ENCODE measurements at regions of chr1 and their contacts with region 1.

Region 1: GRCh38 chr1:234533975-234534876 is 55.2 kb upstream of the TARBP1 start:
- DNase-seq: peak; percentile 62 to 98
- H3K4me3 ChIP-seq: peak overlapping the region in 1 of 2 donors; percentile 2
- H3K27ac ChIP-seq: peak overlapping the region; percentile 95 to 99
- H3K4me1 ChIP-seq: peaks cover 43 to 90% of the 10 kb centered on the region in 2 donors
- H3K27me3 ChIP-seq: no peaks in the 10 kb centered on the region
- CTCF ChIP-seq: no peak

Region 2: DNA sequence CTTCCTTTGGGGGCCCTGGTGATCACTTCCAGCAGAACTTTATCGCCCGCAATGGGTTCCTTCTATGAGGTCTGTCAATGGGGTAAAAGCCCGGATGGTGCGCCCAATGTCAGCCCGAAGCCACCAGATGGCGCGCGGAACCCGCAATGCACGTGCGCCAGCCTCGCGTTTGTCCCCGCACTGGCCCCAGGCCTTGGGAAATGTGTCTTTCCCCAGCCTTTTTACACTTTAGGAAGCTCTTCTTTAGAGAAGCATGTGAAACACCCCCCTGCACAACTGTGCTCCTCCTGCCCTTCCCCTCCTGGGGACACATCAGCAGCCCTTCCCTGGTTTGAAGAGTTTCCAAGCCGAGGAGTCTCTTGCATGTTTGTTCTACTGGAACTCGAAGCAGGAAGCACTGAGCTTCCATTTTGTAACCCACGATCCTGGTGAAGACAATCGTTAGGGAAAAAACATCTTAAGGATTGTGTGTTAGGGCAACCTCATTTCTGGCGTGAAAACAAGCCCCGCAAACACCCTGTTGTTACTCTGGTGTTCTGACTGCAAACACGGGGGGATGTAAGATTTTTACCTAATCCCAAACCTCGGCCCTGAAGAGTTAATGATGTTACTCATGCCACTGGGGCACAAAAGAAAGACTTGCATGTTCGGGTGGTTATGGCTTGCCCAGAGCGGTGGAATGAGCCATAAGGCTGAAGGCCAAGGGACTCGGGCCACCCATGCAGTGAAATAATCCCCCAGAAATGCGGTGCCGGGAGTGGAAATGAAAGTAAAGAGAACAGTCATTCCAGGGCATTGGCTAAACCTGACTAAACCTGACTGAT is 34.9 kb before region 1 on chr1:
- intact Hi-C with region 1: loop called (anchors 1 kb)
- DNase-seq: peak; percentile 71 to 96
- H3K4me3 ChIP-seq: peak overlapping the region; percentile 17 to 49
- H3K27ac ChIP-seq: peak overlapping the region; percentile 85 to 95
- H3K4me1 ChIP-seq: peaks cover 8 to 30% of the 10 kb centered on the region in 2 donors
- H3K27me3 ChIP-seq: no peaks in the 10 kb centered on the region
- CTCF ChIP-seq: peak; percentile 94 to 97 (median 94)

Region 3: GRCh38 chr1:234599617-234600417 is 65.6 kb after region 1 on chr1:
- intact Hi-C with region 1: loop called (anchors 2 kb)
- DNase-seq: peak; percentile 76 to 96
- H3K4me3 ChIP-seq: peak overlapping the region; percentile 49 to 57
- H3K27ac ChIP-seq: peak overlapping the region; percentile 96 to 99
- H3K4me1 ChIP-seq: peaks cover 11 to 40% of the 10 kb centered on the region in 2 donors
- H3K27me3 ChIP-seq: no peaks in the 10 kb centered on the region
- CTCF ChIP-seq: peak in 1 of 3 experiments; percentile 9

Region 4: DNA sequence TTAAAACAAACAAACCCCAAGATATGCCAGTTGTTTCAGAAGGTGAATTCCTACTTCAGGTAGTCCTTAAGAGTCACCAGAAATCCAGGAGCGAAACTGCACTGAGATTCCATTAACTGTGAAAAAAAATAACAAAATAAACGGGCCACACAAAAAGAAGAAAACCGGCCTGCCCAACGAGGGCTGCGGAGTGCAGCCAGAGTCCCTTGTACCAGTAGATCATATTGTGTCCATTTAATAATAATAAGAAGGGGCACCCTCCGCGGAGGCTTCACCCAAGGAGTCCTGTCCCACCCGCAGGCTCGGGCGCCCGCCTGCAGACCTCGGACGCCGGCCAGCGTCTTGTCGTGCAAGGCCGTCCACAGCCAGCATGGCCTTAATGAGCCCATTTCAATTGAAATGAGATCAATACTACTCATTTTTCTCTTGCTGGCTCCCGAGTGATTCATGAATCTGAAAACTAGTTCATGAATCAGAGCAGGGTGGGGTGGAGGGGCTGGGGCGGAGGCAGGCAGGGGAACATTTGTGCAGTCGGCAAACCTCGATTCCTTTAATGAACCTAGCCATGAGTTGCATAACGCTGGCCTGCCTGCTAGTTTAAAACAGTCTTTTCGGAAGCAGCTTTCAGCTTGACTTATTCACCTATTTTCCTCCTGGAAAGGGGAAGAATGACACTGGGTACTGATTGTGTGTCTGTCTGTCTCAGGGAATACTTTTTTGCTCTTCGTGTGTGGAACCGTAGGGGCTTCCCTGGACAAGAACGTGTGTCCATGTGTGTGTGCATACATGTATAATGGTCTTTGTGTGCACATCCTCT is 188.9 kb after region 1 on chr1:
- intact Hi-C with region 1: loop called (anchors 2 kb)
- DNase-seq: peak; percentile 63 to 93
- H3K4me3 ChIP-seq: peak overlapping the region; percentile 26 to 46
- H3K27ac ChIP-seq: peak overlapping the region; percentile 95 to 97
- H3K4me1 ChIP-seq: peaks cover 36 to 79% of the 10 kb centered on the region in 2 donors
- H3K27me3 ChIP-seq: no peaks in the 10 kb centered on the region
- CTCF ChIP-seq: no peak

Region 5: DNA sequence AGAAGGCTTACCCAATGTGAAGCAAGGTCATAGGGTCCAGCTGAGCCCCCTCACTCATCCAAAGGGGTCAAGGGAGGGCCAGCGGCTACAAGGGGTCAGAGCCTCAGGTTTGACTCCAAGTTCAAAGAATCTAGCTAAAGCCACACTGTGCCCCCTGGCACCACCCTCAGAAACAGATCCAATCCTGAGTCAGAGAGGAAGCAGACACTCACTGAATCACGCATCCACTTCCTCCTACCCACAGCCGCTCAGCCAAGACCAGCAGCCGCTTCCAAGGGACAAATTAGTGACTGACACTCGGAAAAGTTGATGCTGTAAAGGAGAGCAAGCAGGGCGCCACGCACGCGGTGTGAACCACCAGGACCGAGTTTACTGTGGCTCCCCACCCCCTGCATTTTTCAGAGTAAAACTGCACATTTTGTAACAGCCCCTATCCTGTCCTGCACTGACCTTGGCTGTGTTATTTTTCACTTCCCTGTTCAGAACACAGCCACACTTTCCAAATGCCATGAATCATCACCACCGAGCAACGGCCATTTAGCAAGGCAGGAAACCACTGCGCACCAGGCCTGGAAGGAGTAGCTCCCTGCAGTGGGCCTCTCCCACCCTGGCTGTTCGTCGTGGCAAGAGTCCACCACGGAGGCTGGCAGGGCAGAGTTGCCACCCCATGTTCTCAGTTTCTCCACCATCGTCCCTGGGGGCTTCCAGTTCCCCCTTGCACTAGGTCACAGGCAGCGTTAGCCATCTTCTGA is 446.6 kb after region 1 on chr1:
- intact Hi-C with region 1: loop called (anchors 5 kb)
- DNase-seq: peak; percentile 91 to 98
- H3K4me3 ChIP-seq: peak overlapping the region in 1 of 2 donors; percentile 44
- H3K27ac ChIP-seq: peak overlapping the region; percentile 98 to 99
- H3K4me1 ChIP-seq: peaks cover 24 to 65% of the 10 kb centered on the region in 2 donors
- H3K27me3 ChIP-seq: no peaks in the 10 kb centered on the region
- CTCF ChIP-seq: no peak

Region 6: DNA sequence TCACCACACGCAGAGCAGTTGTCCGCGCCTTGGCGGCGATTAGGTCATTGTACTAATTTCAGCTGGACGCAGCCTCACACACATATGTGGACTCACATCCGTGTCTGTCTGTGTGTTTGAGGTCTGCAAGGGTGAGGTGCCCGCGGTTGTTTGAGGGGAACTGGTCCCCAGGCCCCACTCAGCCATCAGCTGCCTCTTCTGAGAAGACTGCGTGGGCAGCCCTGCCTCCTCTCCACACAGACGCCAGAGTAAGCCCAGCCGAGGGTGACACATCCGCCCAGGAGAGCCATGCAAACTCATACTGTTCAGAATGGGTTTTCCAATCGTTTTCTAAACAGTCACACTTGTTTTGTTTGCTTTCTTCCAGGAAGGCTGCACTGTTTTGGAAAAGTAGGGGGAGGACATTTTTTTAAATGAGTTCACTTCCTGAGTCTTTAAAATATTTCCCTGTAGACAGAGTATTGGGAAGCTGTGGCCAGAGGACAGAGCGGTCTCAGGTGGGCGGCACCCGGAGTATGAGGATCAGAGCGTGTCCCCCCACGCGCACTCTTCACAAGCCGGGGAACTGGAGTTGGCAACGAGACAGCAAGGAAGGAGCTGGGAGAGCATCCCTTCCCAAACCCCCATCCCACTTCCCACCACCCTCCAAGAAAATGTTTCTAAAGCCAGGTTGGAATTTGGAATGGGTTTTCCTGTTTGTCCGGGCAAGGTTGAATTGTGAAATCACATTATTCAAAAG is 541.1 kb after region 1 on chr1:
- intact Hi-C with region 1: loop called (anchors 2 kb)
- DNase-seq: peak; percentile 82 to 96
- H3K4me3 ChIP-seq: peak overlapping the region; percentile 32 to 49
- H3K27ac ChIP-seq: peak overlapping the region; percentile 94 to 98
- H3K4me1 ChIP-seq: peaks cover 19 to 71% of the 10 kb centered on the region in 2 donors
- H3K27me3 ChIP-seq: no peaks in the 10 kb centered on the region
- CTCF ChIP-seq: no peak